ENCODE measurements at regions of chr7 and their contacts with region 1.

Region 1: GRCh38 chr7:40057292-40057691 is 77.1 kb downstream of the MPLKIP start:
- DNase-seq: no peak
- H3K4me3 ChIP-seq: no peak overlapping the region
- H3K4me3 Mint-ChIP-seq: no peak overlapping the region
- H3K27ac ChIP-seq: no peak overlapping the region
- H3K27ac Mint-ChIP-seq: peak overlapping the region in 4 of 7 donors; percentile 30 to 56 (median 42)
- H3K4me1 ChIP-seq: no peaks in the 10 kb centered on the region
- H3K4me1 Mint-ChIP-seq: peaks cover 6 to 19% (median 12%) of the 10 kb centered on the region in 4 donors
- H3K27me3 ChIP-seq: no peaks in the 10 kb centered on the region
- H3K27me3 Mint-ChIP-seq: no peaks in the 10 kb centered on the region

Region 2: GRCh38 chr7:39888191-39888845 is 169.0 kb before region 1 on chr7:
- CTCF ChIA-PET with region 1: interaction called, 396 read pairs
- POLR2A ChIA-PET with region 1: no interaction called
- intact Hi-C with region 1: no loop called
- DNase-seq: no peak
- H3K4me3 ChIP-seq: no peak overlapping the region
- H3K4me3 Mint-ChIP-seq: no peak overlapping the region
- H3K27ac ChIP-seq: no peak overlapping the region
- H3K27ac Mint-ChIP-seq: no peak overlapping the region
- H3K4me1 ChIP-seq: no peaks in the 10 kb centered on the region
- H3K4me1 Mint-ChIP-seq: no peaks in the 10 kb centered on the region
- H3K27me3 ChIP-seq: no peaks in the 10 kb centered on the region
- H3K27me3 Mint-ChIP-seq: peaks cover 1 to 13% of the 10 kb centered on the region in 2 donors

Region 3: DNA sequence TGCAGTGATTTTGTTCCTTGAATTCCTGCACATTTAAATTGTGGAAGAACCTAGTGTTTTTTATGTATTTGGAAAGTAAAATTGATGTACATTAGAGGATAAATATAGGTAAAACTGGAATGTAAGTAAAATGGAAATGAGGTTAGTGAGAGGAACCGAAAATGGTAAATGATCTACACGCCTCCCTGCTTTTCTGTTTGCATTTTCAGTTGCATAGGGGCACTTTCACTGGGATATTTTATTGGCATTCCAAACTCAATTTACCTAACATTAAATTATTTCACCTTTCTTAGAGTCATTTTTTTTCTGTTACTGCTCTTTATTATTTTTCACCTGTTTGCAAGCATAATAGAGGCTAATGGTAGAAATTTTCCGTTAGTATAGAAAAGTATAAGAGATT is 99.3 kb before region 1 on chr7:
- CTCF ChIA-PET with region 1: interaction called, 44 read pairs
- POLR2A ChIA-PET with region 1: interaction called, 3 read pairs
- intact Hi-C with region 1: no loop called
- DNase-seq: no peak
- H3K4me3 ChIP-seq: no peak overlapping the region
- H3K4me3 Mint-ChIP-seq: peak overlapping the region in 3 of 8 donors; percentile 10 to 74 (median 48)
- H3K27ac ChIP-seq: no peak overlapping the region
- H3K27ac Mint-ChIP-seq: peak overlapping the region in 1 of 7 donors; percentile 38
- H3K4me1 ChIP-seq: peaks cover 68% of the 10 kb centered on the region
- H3K4me1 Mint-ChIP-seq: peaks cover 56 to 88% (median 72%) of the 10 kb centered on the region in 4 donors
- H3K27me3 ChIP-seq: no peaks in the 10 kb centered on the region
- H3K27me3 Mint-ChIP-seq: no peaks in the 10 kb centered on the region

Region 4: DNA sequence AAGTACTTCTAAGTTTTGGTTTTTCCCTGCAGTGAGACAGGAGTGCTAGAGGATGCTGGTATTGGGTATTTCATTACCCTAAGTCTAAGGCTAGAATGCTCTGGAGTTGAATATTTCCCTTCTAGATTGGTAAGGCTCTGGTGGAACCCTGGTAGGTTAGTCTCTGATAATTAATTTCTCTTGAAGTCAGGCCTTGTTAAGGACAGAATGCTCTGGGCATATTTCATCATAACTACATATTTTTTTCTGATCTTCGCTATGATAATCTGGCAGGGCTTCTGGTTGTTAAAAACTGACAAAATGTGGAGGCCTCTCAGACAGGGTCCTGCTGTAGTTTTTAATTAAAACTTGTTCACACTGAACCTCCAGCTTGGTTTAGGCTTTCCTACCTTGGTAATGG is 23.5 kb before region 1 on chr7:
- CTCF ChIA-PET with region 1: interaction called, 32 read pairs
- POLR2A ChIA-PET with region 1: no interaction called
- intact Hi-C with region 1: no loop called
- DNase-seq: no peak
- H3K4me3 ChIP-seq: no peak overlapping the region
- H3K4me3 Mint-ChIP-seq: no peak overlapping the region
- H3K27ac ChIP-seq: no peak overlapping the region
- H3K27ac Mint-ChIP-seq: peak overlapping the region in 3 of 7 donors; percentile 1 to 45 (median 18)
- H3K4me1 ChIP-seq: peaks cover 8% of the 10 kb centered on the region
- H3K4me1 Mint-ChIP-seq: peaks cover 19 to 35% (median 33%) of the 10 kb centered on the region in 4 donors
- H3K27me3 ChIP-seq: no peaks in the 10 kb centered on the region
- H3K27me3 Mint-ChIP-seq: no peaks in the 10 kb centered on the region

Region 5: GRCh38 chr7:40072268-40072667 is 15.0 kb after region 1 on chr7:
- CTCF ChIA-PET with region 1: interaction called, 12 read pairs
- POLR2A ChIA-PET with region 1: no interaction called
- intact Hi-C with region 1: no loop called
- DNase-seq: no peak
- H3K4me3 ChIP-seq: no peak overlapping the region
- H3K4me3 Mint-ChIP-seq: no peak overlapping the region
- H3K27ac ChIP-seq: no peak overlapping the region
- H3K27ac Mint-ChIP-seq: peak overlapping the region in 1 of 7 donors; percentile 37
- H3K4me1 ChIP-seq: no peaks in the 10 kb centered on the region
- H3K4me1 Mint-ChIP-seq: peaks cover 0 to 3% (median 0%) of the 10 kb centered on the region in 4 donors
- H3K27me3 ChIP-seq: no peaks in the 10 kb centered on the region
- H3K27me3 Mint-ChIP-seq: no peaks in the 10 kb centered on the region

Region 6: DNA sequence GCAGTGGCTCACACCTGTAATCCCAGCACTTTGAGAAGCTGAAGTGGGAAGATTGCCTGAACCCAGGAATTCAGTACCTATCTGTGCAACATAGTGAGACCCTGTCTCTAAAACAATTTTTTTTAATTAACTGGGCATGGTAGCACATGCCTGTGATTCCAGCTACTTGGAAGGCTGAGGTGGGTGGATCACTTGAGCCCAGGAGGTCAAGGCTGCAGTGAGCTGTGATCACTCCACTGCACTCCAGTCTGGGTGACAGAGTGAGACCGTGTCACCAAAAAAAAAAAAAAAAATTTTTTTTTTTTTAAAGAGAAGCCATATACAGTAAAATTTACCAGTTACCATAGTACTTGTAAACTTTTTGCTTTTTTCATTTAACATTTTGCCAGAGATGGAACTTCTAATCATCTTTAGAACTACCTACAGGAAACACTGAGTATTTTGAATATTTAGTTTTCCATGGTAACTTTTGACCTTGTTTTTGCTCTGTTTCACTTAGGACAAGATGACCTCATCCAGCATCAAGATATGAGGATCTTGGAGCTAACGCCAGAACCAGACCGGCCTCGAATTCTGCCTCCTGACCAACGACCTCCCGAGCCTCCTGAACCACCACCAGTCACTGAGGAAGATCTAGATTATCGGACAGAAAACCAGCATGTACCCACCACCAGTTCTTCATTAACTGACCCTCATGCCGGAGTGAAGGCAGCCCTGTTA is 36.5 kb after region 1 on chr7:
- CTCF ChIA-PET with region 1: no interaction called
- POLR2A ChIA-PET with region 1: no interaction called
- intact Hi-C with region 1: no loop called
- DNase-seq: no peak
- H3K4me3 ChIP-seq: no peak overlapping the region
- H3K4me3 Mint-ChIP-seq: peak overlapping the region in 1 of 8 donors; percentile 26
- H3K27ac ChIP-seq: no peak overlapping the region
- H3K27ac Mint-ChIP-seq: peak overlapping the region in 4 of 7 donors; percentile 15 to 54 (median 32)
- H3K4me1 ChIP-seq: no peaks in the 10 kb centered on the region
- H3K4me1 Mint-ChIP-seq: peaks cover 0 to 7% (median 3%) of the 10 kb centered on the region in 4 donors
- H3K27me3 ChIP-seq: no peaks in the 10 kb centered on the region
- H3K27me3 Mint-ChIP-seq: no peaks in the 10 kb centered on the region

Region 7: DNA sequence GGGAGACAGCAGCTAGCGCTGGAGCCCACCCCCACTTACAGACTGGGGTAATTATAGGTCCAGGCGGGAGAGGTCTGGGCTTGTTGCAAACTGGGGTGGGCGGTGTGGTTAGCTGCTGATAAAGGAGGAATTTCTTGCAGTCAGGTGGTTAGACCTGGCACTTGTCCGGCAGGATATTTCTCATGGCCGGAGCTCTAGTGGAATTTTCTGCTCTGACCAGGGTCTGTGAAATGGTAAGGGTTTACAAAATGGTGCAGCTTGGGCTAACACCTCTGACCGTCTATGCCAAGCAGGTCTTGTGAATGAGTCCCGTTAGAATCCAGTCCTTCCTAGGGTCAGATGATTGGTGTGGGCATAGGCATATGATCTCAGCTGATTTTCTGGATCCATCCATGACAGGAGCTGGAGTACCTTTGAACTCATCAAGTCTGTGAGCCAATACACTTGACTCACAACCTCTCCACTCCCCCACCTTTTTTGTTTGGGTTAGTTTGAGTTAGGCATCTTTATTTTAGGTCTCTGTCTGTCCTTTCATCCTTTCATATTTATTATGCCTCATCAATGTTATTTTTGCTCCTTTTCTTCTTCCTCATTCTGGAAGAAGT is 290.9 kb after region 1 on chr7:
- CTCF ChIA-PET with region 1: no interaction called
- POLR2A ChIA-PET with region 1: no interaction called
- intact Hi-C with region 1: no loop called
- DNase-seq: no peak
- H3K4me3 ChIP-seq: no peak overlapping the region
- H3K4me3 Mint-ChIP-seq: no peak overlapping the region
- H3K27ac ChIP-seq: no peak overlapping the region
- H3K27ac Mint-ChIP-seq: no peak overlapping the region
- H3K4me1 ChIP-seq: no peaks in the 10 kb centered on the region
- H3K4me1 Mint-ChIP-seq: no peaks in the 10 kb centered on the region
- H3K27me3 ChIP-seq: no peaks in the 10 kb centered on the region
- H3K27me3 Mint-ChIP-seq: no peaks in the 10 kb centered on the region

Region 8: GRCh38 chr7:40474790-40475680 is 417.7 kb after region 1 on chr7:
- CTCF ChIA-PET with region 1: no interaction called
- POLR2A ChIA-PET with region 1: no interaction called
- intact Hi-C with region 1: no loop called
- DNase-seq: no peak
- H3K4me3 ChIP-seq: no peak overlapping the region
- H3K4me3 Mint-ChIP-seq: no peak overlapping the region
- H3K27ac ChIP-seq: no peak overlapping the region
- H3K27ac Mint-ChIP-seq: no peak overlapping the region
- H3K4me1 ChIP-seq: no peaks in the 10 kb centered on the region
- H3K4me1 Mint-ChIP-seq: no peaks in the 10 kb centered on the region
- H3K27me3 ChIP-seq: no peaks in the 10 kb centered on the region
- H3K27me3 Mint-ChIP-seq: no peaks in the 10 kb centered on the region

Measured in CD4-positive, alpha-beta memory T cell (primary cell).